ENCODE measurements at regions of chr10 and their contacts with region 1.

Region 1: DNA sequence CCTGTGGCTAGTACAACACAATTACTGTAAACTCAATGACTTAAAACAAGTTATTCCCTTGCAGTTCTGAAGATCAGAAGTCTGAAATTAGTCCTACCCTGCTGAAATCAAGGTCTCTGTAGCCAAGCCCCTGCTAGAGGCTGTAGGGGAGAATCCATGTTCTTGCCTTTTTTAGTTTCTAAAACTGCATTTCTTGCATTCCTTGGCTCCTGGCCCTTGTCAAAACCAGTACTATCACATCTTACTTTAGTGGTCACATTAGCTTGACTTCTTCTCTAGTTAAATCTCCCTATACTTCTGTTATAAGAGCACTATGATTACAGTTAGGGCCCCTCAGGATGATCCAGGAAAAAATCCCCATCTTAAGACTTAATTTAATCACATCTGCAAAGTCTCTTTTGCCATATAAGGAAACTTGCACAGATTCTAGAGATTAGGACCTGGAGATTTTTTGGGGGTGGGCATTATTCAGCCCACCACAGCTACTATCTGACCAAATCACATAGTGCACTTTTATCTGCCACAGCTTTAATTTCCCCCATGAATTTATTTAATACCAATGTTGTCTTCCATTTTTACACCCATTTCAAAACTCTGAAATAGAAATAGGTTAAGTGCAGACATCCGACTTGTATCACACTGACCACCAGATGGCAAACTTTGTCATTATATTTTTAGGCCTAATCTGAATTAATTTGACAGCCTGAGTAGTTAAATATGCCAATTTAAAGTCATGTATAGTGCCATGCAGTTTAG is 566.8 kb downstream of the GFRA1 start:
- DNase-seq: peak; percentile 56
- H3K4me3 ChIP-seq: no peak overlapping the region
- H3K27ac ChIP-seq: no peak overlapping the region
- H3K4me1 ChIP-seq: no peaks in the 10 kb centered on the region
- H3K27me3 ChIP-seq: no peaks in the 10 kb centered on the region

Region 2: GRCh38 chr10:115295213-115295805 is 410.9 kb before region 1 on chr10:
- in situ Hi-C with region 1: no loop called
- DNase-seq: no peak
- H3K4me3 ChIP-seq: no peak overlapping the region
- H3K27ac ChIP-seq: no peak overlapping the region
- H3K4me1 ChIP-seq: no peaks in the 10 kb centered on the region
- H3K27me3 ChIP-seq: no peaks in the 10 kb centered on the region

Region 3: GRCh38 chr10:116296291-116296721 is 590.1 kb after region 1 on chr10:
- in situ Hi-C with region 1: loop called (anchors 10 kb)
- DNase-seq: no peak
- H3K4me3 ChIP-seq: no peak overlapping the region
- H3K27ac ChIP-seq: no peak overlapping the region
- H3K4me1 ChIP-seq: no peaks in the 10 kb centered on the region
- H3K27me3 ChIP-seq: no peaks in the 10 kb centered on the region; the same call in 1 of the 2 replicates

Region 4: GRCh38 chr10:116490028-116490662 is 783.9 kb after region 1 on chr10:
- in situ Hi-C with region 1: no loop called
- DNase-seq: peak; percentile 60
- H3K4me3 ChIP-seq: no peak overlapping the region
- H3K27ac ChIP-seq: no peak overlapping the region
- H3K4me1 ChIP-seq: no peaks in the 10 kb centered on the region
- H3K27me3 ChIP-seq: no peaks in the 10 kb centered on the region